Astrocyte of the cerebellum (primary cell): ENCODE measurements at regions of chr13 and their contacts with region 1.

Region 1: GRCh38 chr13:74511523-74511922 is 377.3 kb upstream of the KLF12 start:
- DNase-seq: no peak
- H3K4me3 ChIP-seq: no peak overlapping the region
- CTCF ChIP-seq: no peak

Region 2: GRCh38 chr13:74465271-74465670 is 46.3 kb before region 1 on chr13:
- in situ Hi-C with region 1: loop called (anchors 5 kb)
- DNase-seq: no peak
- H3K4me3 ChIP-seq: no peak overlapping the region
- CTCF ChIP-seq: no peak

Region 3: GRCh38 chr13:74533226-74533625 is 21.7 kb after region 1 on chr13:
- in situ Hi-C with region 1: no loop called
- DNase-seq: no peak
- H3K4me3 ChIP-seq: no peak overlapping the region
- CTCF ChIP-seq: no peak

Region 4: GRCh38 chr13:74625541-74625940 is 114.0 kb after region 1 on chr13:
- in situ Hi-C with region 1: no loop called
- DNase-seq: no peak
- H3K4me3 ChIP-seq: no peak overlapping the region
- CTCF ChIP-seq: no peak